HCT116 (cell line): ENCODE measurements at regions of chr19 and their contacts with region 1.

Region 1: GRCh38 chr19:45469132-45469944 is 1.5 kb downstream of the FOSB start:
- DNase-seq: peak; percentile 76
- ATAC-seq: peak; percentile 80
- H3K4me3 ChIP-seq: peak overlapping the region; percentile 74 to 97
- H3K27ac ChIP-seq: peak overlapping the region; percentile 78
- H3K4me1 ChIP-seq: peaks cover 4 to 43% of the 10 kb centered on the region in 2 experiments
- H3K27me3 ChIP-seq: no peaks in the 10 kb centered on the region
- CTCF ChIP-seq: no peak
- POLR2A ChIP-seq: no peak
- RAD21 ChIP-seq: no peak

Region 2: GRCh38 chr19:45455707-45456499 is 13.4 kb before region 1 on chr19:
- CTCF ChIA-PET with region 1: interaction called, 3 read pairs
- POLR2A ChIA-PET with region 1: interaction called, 72 read pairs
- RAD21 ChIA-PET with region 1: no interaction called
- intact Hi-C with region 1: loop called (anchors 1 kb)
- DNase-seq: peak; percentile 95
- ATAC-seq: peak; percentile 93
- H3K4me3 ChIP-seq: peak overlapping the region; percentile 13 to 43; a peak in 3 of 4 replicates
- H3K27ac ChIP-seq: peak overlapping the region; percentile 82
- H3K4me1 ChIP-seq: peaks cover 26 to 53% of the 10 kb centered on the region in 2 experiments
- H3K27me3 ChIP-seq: no peaks in the 10 kb centered on the region
- CTCF ChIP-seq: no peak
- POLR2A ChIP-seq: no peak
- RAD21 ChIP-seq: no peak

Region 3: DNA sequence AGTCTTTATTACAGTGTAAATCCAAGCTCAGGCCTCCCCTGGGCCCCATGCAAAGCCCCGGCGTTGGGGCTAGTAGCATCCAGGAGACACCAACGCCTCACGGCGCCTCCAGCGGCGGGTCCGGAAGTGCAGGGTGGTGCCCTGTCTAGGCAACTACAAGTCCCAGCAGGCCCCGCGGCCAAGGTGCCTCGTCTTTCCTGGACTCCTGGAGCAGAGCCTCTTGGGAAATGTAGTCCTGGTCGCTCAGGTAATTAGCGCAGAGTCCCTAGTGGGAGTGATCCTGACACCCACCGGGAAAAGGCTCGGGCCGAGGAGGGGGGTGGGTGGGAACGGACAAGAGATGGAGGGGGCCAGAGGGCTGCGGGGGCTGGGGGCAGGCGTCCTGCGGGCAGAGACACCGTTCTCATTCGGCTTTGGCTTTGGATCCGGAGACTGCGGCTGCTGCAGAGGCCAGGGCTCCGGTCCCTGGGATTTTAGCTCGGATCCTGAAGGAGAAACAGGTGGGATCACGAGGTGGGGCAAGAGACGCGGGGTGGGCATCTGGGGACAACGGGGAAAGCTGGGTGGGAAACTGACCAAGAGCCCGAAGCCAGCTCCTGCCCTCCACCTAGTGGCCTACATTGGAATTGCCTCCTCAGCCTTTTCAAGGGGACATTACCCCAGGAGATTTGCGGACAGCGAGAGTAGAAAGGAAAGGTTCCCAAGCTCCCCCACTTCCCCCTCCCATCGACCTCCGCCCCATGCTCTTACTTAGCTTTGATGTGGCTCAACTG is 16.2 kb after region 1 on chr19:
- CTCF ChIA-PET with region 1: interaction called, 56 read pairs
- POLR2A ChIA-PET with region 1: interaction called, 11 read pairs
- RAD21 ChIA-PET with region 1: no interaction called
- intact Hi-C with region 1: no loop called
- DNase-seq: peak; percentile 91
- ATAC-seq: peak; percentile 95
- H3K4me3 ChIP-seq: peak overlapping the region; percentile 41 to 51
- H3K27ac ChIP-seq: peak overlapping the region; percentile 44; the same call in 1 of the 2 replicates
- H3K4me1 ChIP-seq: peaks cover 13 to 28% of the 10 kb centered on the region in 2 experiments
- H3K27me3 ChIP-seq: no peaks in the 10 kb centered on the region
- CTCF ChIP-seq: peak; percentile 68 to 94 (median 86)
- POLR2A ChIP-seq: no peak
- RAD21 ChIP-seq: peak; percentile 64